ENCODE measurements at regions of chrX and their contacts with region 1.

Region 1: GRCh38 chrX:16892504-16893362 is 22.6 kb upstream of the RBBP7 start:
- DNase-seq: peak in 4 of 5 donors; percentile 60 to 66 (median 61)
- ATAC-seq: peak in 3 of 4 donors; percentile 76 to 84 (median 77)
- H3K4me3 ChIP-seq: no peak overlapping the region
- H3K27ac ChIP-seq: no peak overlapping the region
- H3K4me1 ChIP-seq: no peaks in the 10 kb centered on the region
- H3K27me3 ChIP-seq: peaks cover 0 to 50% (median 0%) of the 10 kb centered on the region in 9 donors
- CTCF ChIP-seq: peak; percentile 62 to 89 (median 74)
- POLR2A ChIP-seq: no peak

Region 2: DNA sequence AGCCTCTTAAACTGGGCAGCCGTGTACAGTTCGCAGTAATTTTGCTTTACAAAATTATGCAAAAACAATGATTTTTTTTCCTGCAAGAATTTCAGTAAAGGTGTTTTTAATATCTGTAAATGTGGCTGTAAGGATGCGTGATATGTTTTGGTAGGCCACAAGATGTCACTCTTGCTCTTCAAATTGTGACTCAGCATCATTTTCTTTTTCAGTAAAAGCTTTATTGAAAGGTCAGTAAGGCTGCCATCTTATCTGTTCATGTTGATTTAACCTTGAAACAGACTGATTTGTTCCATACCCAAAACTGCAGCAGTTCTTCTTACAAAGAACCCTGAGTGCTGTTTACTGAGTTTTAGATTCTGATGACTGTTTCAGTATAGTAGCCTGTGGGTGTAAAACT is 66.5 kb before region 1 on chrX:
- intact Hi-C with region 1: loop called in 7 of 10 experiments (anchors 2 to 10 kb)
- DNase-seq: no peak
- ATAC-seq: peak in 2 of 4 donors; percentile 35 to 39
- H3K4me3 ChIP-seq: no peak overlapping the region
- H3K27ac ChIP-seq: no peak overlapping the region
- H3K4me1 ChIP-seq: peaks cover 0 to 12% (median 2%) of the 10 kb centered on the region in 12 donors
- H3K27me3 ChIP-seq: no peaks in the 10 kb centered on the region
- CTCF ChIP-seq: peak in 11 of 12 donors; percentile 32 to 63 (median 50)
- POLR2A ChIP-seq: no peak

Region 3: GRCh38 chrX:16914058-16914457 is 21.3 kb after region 1 on chrX:
- intact Hi-C with region 1: no loop called
- DNase-seq: no peak
- ATAC-seq: peak in 1 of 4 donors; percentile 49
- H3K4me3 ChIP-seq: no peak overlapping the region
- H3K27ac ChIP-seq: peak overlapping the region in 1 of 12 donors; percentile 67
- H3K4me1 ChIP-seq: no peaks in the 10 kb centered on the region
- H3K27me3 ChIP-seq: peaks cover 0 to 51% (median 0%) of the 10 kb centered on the region in 9 donors
- CTCF ChIP-seq: no peak
- POLR2A ChIP-seq: no peak

Region 4: GRCh38 chrX:16946361-16946964 is 53.7 kb after region 1 on chrX and contains the start of gene REPS2:
- intact Hi-C with region 1: loop called in 1 of 10 experiments (anchors 10 kb)
- DNase-seq: peak; percentile 78 to 90 (median 82)
- ATAC-seq: peak; percentile 95 to 100 (median 99)
- H3K4me3 ChIP-seq: peak within 1 kb of the TSS; percentile 42 to 75 (median 60)
- H3K27ac ChIP-seq: peak within 1 kb of the TSS in 1 of 12 donors; percentile 17
- H3K4me1 ChIP-seq: peaks cover 0 to 6% (median 0%) of the 10 kb centered on the region in 12 donors
- H3K27me3 ChIP-seq: peaks cover 0 to 10% (median 0%) of the 10 kb centered on the region in 9 donors
- CTCF ChIP-seq: no peak
- POLR2A ChIP-seq: no peak
- total RNA-seq, gene REPS2: 3.3 to 11.9 (median 6.9) TPM

Region 5: DNA sequence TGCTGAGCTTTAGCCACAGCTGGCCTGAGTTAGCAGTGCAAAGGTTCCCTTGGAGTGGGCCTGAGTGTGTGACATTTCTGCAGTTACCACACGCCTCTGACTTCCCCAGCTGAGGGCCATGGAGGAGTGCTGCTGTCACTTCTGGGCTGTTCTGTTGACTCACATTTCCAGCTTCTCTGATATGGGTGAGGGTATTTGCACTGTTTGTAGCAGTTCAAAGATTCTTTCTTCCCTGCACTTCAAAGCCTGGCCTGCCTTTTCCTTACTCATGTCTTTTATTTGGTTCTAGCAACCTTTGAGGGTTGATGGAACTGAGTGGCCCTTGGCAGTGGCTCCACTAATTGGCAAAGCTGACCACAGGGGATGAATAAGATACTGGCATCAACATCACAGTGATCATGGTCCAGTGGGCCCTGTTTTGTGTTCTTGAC is 818.2 kb after region 1 on chrX:
- intact Hi-C with region 1: no loop called
- DNase-seq: no peak
- ATAC-seq: no peak
- H3K4me3 ChIP-seq: no peak overlapping the region
- H3K27ac ChIP-seq: no peak overlapping the region
- H3K4me1 ChIP-seq: no peaks in the 10 kb centered on the region
- H3K27me3 ChIP-seq: peaks cover 0 to 5% (median 0%) of the 10 kb centered on the region in 9 donors
- CTCF ChIP-seq: no peak
- POLR2A ChIP-seq: no peak